Vagina (tissue), 2 donors: ENCODE measurements at regions of chr16 and their contacts with region 1.

Region 1: DNA sequence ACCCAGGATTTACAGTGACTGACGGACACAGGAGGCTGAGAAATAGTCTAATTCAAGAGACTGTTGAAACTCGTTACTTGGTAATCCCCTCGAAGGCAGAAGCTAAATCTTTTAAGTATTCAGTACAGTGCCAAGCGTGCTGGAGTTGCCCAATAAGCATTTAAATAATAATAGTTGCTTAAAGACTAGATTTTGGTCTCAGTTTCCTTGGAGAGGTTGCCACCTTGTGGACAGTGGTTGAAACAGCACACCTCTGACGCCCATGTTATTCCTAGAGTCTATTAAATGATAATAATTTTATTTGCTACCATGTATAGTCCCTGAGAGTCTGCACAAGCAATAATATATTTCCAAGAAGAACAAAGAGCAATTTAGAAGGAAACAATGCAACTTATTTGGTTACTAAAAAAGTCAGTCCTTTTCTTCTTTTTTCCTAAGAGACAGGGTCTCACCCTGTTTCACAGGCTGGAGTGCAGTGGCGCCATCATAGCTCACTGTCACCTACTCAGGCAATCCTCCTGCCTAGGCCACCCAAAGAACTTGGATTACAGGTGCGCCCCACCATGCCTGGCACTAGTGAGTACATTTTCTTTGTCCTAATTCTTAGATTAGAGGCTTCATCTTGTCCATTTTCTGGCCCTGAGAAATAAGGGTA is 138.0 kb upstream of the NUDT7 start:
- DNase-seq: no peak
- H3K4me3 ChIP-seq: no peak overlapping the region
- H3K27ac ChIP-seq: no peak overlapping the region
- H3K4me1 ChIP-seq: no peaks in the 10 kb centered on the region
- H3K27me3 ChIP-seq: no peaks in the 10 kb centered on the region
- CTCF ChIP-seq: peak; percentile 82 to 97 (median 95)
- POLR2A ChIP-seq: no peak

Region 2: DNA sequence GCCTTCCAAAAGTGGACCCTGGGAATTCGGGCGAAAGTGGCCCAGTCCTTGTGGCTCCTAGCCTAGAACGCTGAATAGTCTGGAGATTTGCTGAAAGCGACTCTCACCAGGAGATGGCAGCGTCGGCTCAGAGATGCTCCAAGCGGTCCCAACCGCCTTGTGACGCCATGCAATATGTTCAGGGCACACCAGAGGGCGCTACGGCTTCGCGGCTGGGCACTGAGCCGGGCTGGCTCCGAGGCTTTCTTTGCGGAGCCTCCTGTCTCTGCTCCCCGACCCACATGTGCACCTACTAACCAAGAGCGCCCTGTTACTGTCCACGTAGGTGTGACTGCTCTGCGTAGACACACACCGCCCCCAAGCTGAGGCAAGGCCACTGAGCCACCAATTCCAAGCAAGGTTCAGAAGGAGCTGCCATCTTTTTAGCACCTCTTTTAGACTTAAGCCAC is 348.2 kb before region 1 on chr16:
- intact Hi-C with region 1: loop called (anchors 5 kb)
- DNase-seq: no peak
- H3K4me3 ChIP-seq: peak overlapping the region in 1 of 2 donors; percentile 35
- H3K27ac ChIP-seq: no peak overlapping the region
- H3K4me1 ChIP-seq: no peaks in the 10 kb centered on the region
- H3K27me3 ChIP-seq: no peaks in the 10 kb centered on the region
- CTCF ChIP-seq: peak; percentile 99 to 100 (median 100)
- POLR2A ChIP-seq: no peak

Region 3: GRCh38 chr16:77624085-77624484 is 39.8 kb after region 1 on chr16:
- intact Hi-C with region 1: no loop called
- DNase-seq: no peak
- H3K4me3 ChIP-seq: no peak overlapping the region
- H3K27ac ChIP-seq: no peak overlapping the region
- H3K4me1 ChIP-seq: no peaks in the 10 kb centered on the region
- H3K27me3 ChIP-seq: no peaks in the 10 kb centered on the region
- CTCF ChIP-seq: no peak
- POLR2A ChIP-seq: no peak

Region 4: GRCh38 chr16:77660311-77660710 is 76.0 kb after region 1 on chr16:
- intact Hi-C with region 1: loop called (anchors 10 kb)
- DNase-seq: no peak
- H3K4me3 ChIP-seq: no peak overlapping the region
- H3K27ac ChIP-seq: no peak overlapping the region
- H3K4me1 ChIP-seq: no peaks in the 10 kb centered on the region
- H3K27me3 ChIP-seq: no peaks in the 10 kb centered on the region
- CTCF ChIP-seq: peak; percentile 27 to 47 (median 33)
- POLR2A ChIP-seq: no peak